Head of caudate nucleus (tissue), 42 donors: ENCODE measurements at regions of chr2 and their contacts with region 1.

Region 1: GRCh38 chr2:207625018-207625907 is at the start of gene METTL21A:
- DNase-seq: peak; percentile 65 to 93 (median 87)

Region 2: GRCh38 chr2:207311316-207312005 is 313.8 kb before region 1 on chr2:
- intact Hi-C with region 1: no loop called
- DNase-seq: peak in 4 of 42 donors; percentile 1 to 49 (median 12)

Region 3: DNA sequence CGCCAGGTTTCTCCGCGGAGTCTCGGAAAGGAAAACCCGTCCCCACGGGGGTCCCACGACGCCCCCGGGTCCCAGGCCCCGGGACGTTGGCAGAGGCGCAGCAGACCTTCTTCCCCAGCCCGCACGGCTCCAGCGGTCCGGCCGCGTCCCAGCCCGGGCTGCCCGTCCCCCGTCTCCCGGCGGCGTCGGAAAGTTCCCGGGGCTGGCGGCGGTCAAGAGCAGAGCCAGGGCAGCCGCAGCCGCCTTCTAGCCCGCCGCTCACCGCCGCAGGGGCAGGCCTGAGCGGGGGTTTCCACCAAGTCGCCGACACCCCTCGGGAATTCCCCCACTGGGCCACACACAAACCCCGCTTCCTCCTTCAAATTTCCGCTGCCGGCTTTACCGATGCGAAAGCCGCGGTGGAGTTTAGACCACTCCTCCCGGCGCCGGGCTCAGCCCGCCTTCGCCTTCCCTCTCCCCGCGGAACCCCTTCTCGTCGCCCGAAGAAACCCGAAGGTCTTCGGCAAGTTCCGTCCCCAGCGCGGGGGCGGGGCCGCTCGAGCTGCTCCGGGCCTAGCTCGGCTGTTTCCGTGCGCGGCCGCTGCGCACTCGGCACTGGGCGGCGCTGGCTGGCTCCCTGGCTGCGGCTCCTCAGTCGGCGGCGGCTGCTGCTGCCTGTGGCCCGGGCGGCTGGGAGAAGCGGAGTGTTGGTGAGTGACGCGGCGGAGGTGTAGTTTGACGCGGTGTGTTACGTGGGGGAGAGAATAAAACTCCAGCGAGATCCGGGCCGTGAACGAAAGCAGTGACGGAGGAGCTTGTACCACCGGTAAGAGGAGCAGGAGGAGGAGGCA is 95.7 kb before region 1 on chr2 and contains the start of gene CREB1:
- intact Hi-C with region 1: loop called (anchors 2 kb)
- DNase-seq: peak; percentile 95 to 100 (median 98)

Region 4: DNA sequence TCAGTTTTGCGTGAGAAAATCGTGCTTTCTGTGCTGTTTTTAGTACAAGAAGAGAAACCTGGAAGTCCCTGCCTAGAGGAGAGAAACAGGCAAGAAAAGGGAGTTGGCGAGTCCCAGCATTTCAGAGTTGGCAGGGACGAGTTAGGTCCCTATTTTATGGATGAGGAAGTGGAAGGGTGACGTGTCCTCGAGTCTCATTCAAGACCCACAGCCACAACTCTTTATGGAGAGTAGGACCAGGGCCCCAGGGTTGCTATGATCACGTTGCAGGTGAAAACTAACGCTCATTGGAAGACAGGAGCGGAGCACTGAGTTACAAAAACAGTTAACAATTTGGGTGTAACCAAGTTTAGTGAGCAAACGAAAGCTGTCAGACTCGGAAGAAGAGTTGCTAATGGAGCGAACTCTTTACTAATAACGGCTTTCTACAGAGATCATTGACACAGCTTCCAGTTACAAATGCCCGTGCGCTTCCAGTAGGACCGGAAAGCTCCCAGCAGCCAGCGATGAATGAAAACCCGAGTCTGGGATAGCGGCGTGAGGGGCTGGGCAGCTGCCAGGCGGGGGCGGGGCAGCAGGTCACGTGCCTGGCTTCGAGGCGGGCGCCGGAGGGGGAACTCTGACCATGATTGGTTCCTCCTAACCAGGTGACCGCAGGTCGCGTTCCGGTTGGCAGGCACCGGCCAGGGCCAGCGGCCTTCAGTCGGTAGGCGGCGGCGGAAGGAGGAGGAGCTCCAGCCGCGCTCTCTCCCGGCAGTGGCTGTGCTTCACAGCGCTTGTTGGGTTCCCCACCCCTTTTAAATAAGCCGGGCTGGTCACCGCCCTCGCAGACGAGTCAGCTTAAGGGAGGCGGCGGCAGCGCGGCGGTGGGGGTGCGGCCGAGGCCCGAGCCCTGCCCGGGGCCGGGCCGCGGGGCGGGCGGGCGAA is 85.8 kb after region 1 on chr2 and contains the start of gene CCNYL1:
- intact Hi-C with region 1: loop called (anchors 2 kb)
- DNase-seq: peak; percentile 97 to 100 (median 99)

Region 5: DNA sequence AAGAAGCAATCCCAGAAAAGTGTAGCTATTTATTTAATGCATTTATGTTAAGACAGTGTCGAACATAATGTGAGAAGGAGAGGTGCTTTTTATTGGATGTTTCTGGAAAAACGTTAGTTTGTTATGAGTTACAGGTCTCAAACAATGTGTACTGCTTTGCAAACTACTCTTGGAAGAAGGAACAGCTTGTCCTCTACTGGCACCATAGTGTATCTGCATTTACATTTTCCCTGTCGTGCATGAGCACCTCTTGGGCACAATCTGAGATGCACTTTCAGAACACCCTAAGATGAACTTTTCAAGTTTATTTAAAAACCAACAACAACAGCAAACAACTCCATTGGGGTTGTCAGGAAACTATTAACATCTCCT is 109.0 kb after region 1 on chr2:
- intact Hi-C with region 1: loop called (anchors 5 kb)
- DNase-seq: peak in 3 of 42 donors; percentile 40 to 47 (median 46)

Region 6: GRCh38 chr2:208025037-208025813 is 400.0 kb after region 1 on chr2 and contains the start of gene PLEKHM3:
- intact Hi-C with region 1: loop called (anchors 10 kb)
- DNase-seq: peak; percentile 80 to 96 (median 90)

Region 7: GRCh38 chr2:208265801-208266552 is 640.7 kb after region 1 on chr2 and contains the start of gene PIKFYVE:
- intact Hi-C with region 1: loop called (anchors 5 kb)
- DNase-seq: peak; percentile 96 to 100 (median 98)